IMR-90 (cell line): ENCODE measurements at regions of chr10 and their contacts with region 1.

Region 1: GRCh38 chr10:43396928-43397624 is 11.9 kb downstream of the HNRNPF start:
- DNase-seq: peak; percentile 72
- ATAC-seq: peak; percentile 49
- H3K4me3 ChIP-seq: peak overlapping the region; percentile 88
- H3K27ac ChIP-seq: peak overlapping the region; percentile 85
- H3K4me1 ChIP-seq: peaks cover 15% of the 10 kb centered on the region
- H3K27me3 ChIP-seq: no peaks in the 10 kb centered on the region
- CTCF ChIP-seq: no peak
- POLR2A ChIP-seq: peak; percentile 61
- RAD21 ChIP-seq: no peak

Region 2: DNA sequence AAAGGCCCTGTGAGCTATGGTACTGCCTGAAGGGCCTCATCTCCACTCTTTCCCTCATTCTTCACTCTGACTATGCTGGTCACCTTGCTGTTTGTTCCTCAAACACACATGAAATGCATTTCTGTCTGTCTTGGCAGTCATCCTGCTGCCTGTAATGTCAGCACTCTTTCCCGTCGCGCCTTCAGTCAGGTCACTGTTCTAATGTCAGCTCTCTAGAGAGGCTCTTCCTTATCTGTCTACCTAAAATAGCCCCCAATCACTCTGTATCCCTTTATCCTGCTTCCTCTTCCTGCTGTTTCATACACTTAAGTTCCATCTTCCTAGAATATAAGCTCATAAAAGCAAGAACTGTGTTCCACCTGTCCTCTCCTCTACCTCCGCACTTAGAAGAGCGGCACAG is 974.2 kb before region 1 on chr10:
- CTCF ChIA-PET with region 1: no interaction called
- POLR2A ChIA-PET with region 1: no interaction called
- dilution Hi-C with region 1: no loop called
- in situ Hi-C with region 1: no loop called
- intact Hi-C with region 1: no loop called
- DNase-seq: no peak
- ATAC-seq: no peak
- H3K4me3 ChIP-seq: no peak overlapping the region
- H3K27ac ChIP-seq: no peak overlapping the region
- H3K4me1 ChIP-seq: no peaks in the 10 kb centered on the region
- H3K27me3 ChIP-seq: no peaks in the 10 kb centered on the region
- CTCF ChIP-seq: no peak
- POLR2A ChIP-seq: no peak
- RAD21 ChIP-seq: no peak

Region 3: DNA sequence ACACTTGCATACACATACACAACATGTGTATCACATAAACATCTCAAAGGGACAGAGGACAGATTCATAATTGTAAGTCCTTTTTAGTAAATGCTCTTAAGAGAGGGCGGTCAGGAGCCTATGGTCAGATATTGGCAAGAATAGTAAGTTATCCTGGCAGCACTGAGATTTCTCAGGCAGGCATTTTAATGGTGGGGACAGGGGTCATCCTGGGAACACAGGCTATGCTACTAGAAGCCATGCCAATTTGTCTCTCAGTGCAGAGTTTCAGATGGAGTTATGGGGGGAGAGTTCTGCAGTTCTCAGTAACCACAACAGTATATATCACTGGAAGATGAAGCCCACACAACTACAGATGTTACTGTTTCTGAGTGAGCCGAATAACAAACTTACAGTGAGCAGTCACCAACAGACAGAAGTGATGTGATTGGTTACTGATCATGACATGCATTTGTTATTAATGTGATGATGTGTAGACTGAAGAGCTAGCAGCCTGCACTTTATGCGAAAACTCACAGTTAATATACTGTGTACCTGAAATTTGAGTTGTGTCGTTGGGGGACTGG is 56.3 kb after region 1 on chr10:
- CTCF ChIA-PET with region 1: no interaction called
- POLR2A ChIA-PET with region 1: no interaction called
- dilution Hi-C with region 1: no loop called
- in situ Hi-C with region 1: loop called (anchors 5 kb)
- intact Hi-C with region 1: no loop called
- DNase-seq: no peak
- ATAC-seq: no peak
- H3K4me3 ChIP-seq: no peak overlapping the region
- H3K27ac ChIP-seq: no peak overlapping the region
- H3K4me1 ChIP-seq: peaks cover 4% of the 10 kb centered on the region; the same call in 1 of the 2 replicates
- H3K27me3 ChIP-seq: no peaks in the 10 kb centered on the region
- CTCF ChIP-seq: no peak
- POLR2A ChIP-seq: no peak
- RAD21 ChIP-seq: no peak